HEK293 (cell line): ENCODE measurements at regions of chr4 and their contacts with region 1.

Region 1: GRCh38 chr4:26288355-26288909 is 32.4 kb upstream of the RBPJ start:
- H3K4me3 ChIP-seq: no peak overlapping the region
- H3K27ac ChIP-seq: no peak overlapping the region
- H3K4me1 ChIP-seq: no peaks in the 10 kb centered on the region
- CTCF ChIP-seq: no peak

Region 2: GRCh38 chr4:26302031-26302899 is 13.8 kb after region 1 on chr4:
- CTCF ChIA-PET with region 1: no interaction called
- POLR2A ChIA-PET with region 1: interaction called, 12 read pairs
- H3K4me3 ChIP-seq: no peak overlapping the region
- H3K27ac ChIP-seq: no peak overlapping the region
- H3K4me1 ChIP-seq: peaks cover 4% of the 10 kb centered on the region
- CTCF ChIP-seq: no peak

Region 3: DNA sequence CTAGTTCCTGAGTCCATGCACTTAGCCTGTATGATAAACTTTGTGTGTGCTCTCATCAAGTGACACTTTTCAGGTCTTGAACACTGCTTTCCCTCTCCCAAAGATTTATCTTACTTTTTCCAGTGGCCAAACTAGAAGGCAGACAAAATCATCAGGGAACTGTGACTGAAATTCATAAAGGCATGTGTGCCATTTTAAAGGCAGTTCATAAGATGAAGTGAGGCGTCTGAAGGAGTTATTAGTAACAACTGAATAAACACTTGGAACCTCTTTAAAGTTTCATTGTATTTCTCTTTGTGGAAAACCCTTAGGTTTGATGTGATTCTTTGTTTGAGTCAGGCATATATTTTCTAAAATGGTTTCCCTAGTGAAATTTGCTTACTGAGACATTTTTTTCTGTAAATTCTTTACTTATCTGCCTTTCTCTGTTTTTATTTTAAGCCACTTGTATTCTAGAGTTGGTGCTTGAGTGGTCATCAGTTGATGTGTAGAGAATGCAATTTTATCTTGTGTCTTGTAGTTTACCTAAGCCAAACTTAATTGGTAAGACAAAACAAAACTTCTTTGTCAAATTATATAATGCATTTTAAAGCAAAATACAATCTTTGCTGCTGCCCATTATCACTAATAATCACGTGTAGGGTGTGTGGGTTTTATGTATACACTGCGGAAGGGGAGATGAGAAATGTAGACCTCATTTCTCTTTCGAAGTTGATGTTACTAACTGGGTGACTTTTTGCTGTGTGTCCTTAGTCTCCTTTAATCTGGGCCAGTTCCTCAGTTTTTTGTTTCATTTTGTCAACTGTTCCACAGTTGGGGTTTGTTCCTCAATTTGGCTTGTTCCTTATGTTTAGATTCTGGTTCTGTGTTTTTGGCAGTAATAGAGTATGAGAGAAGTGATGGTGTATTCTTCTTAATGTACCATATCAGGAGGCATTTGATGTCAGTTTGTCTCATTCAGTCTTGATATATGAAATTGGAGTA is 89.2 kb after region 1 on chr4:
- CTCF ChIA-PET with region 1: no interaction called
- POLR2A ChIA-PET with region 1: no interaction called
- H3K4me3 ChIP-seq: no peak overlapping the region
- H3K27ac ChIP-seq: no peak overlapping the region
- H3K4me1 ChIP-seq: peaks cover 5% of the 10 kb centered on the region; the same call in 1 of the 2 replicates
- CTCF ChIP-seq: no peak